ENCODE measurements at regions of chr11 and their contacts with region 1.

Region 1: GRCh38 chr11:14519917-14520746 is at the start of gene PSMA1:
- DNase-seq: peak; percentile 92
- H3K4me3 Mint-ChIP-seq: peak within 1 kb of the TSS; percentile 94
- H3K27ac Mint-ChIP-seq: peak within 1 kb of the TSS; percentile 94
- H3K4me1 Mint-ChIP-seq: peaks cover 33% of the 10 kb centered on the region
- H3K27me3 Mint-ChIP-seq: no peaks in the 10 kb centered on the region
- total RNA-seq, gene PSMA1: 313 and 340 TPM in 2 replicates

Region 2: DNA sequence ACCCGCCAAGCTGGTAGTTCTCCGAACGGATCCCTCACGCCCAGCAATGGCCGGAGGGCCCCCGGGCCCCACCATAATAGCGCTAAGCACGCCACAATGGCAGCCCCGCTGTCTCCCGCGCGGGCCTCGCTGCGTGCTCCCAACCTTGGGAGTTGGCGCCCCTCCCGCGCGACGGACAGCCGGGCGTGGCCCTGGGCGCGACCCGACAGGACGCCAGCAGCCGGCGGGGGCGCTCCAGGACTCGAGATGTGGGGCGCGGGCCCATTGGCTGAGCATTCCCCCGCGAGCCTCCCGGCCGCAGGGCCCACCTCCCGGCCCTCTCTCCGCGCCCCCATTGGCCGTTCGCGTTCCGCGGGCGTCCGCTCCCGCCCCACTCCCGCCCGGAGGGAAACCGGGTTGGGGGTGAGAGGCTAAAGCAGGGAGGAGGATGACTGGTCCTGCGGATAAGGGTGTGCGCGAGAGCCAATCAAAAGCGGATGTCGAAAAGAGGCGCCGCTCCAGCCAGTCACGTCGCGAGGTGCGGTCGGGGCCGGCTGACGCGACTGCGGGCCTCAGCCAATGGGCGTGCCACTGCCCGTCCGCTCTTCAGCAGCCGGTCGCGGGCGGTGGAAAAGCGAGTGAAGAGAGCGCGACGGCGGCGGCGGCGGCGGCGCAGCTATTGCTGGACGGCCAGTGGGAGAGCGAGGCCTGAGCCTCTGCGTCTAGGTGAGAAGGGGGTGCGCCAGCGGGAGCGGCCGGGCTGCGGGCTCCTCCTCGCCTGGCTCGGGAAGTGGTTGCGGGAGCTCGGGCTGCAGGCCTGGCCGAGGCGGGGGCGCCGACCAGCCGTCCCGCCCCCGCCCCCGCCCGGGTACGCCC is 851.8 kb before region 1 on chr11 and contains the start of gene FAR1:
- intact Hi-C with region 1: loop called (anchors 2 kb)
- DNase-seq: peak; percentile 97
- H3K4me3 Mint-ChIP-seq: peak within 1 kb of the TSS; percentile 98
- H3K27ac Mint-ChIP-seq: peak within 1 kb of the TSS; percentile 99
- H3K4me1 Mint-ChIP-seq: peaks cover 42% of the 10 kb centered on the region
- H3K27me3 Mint-ChIP-seq: peaks cover 17% of the 10 kb centered on the region
- total RNA-seq, gene FAR1: 67.3 and 67.4 TPM in 2 replicates

Region 3: GRCh38 chr11:14499554-14500180 is 20.5 kb before region 1 on chr11 and contains the start of gene COPB1:
- intact Hi-C with region 1: loop called (anchors 1 kb)
- DNase-seq: peak; percentile 90
- H3K4me3 Mint-ChIP-seq: peak within 1 kb of the TSS; percentile 100
- H3K27ac Mint-ChIP-seq: peak within 1 kb of the TSS; percentile 98
- H3K4me1 Mint-ChIP-seq: peaks cover 49% of the 10 kb centered on the region
- H3K27me3 Mint-ChIP-seq: no peaks in the 10 kb centered on the region
- total RNA-seq, gene COPB1: 94.8 and 101 TPM in 2 replicates

Region 4: DNA sequence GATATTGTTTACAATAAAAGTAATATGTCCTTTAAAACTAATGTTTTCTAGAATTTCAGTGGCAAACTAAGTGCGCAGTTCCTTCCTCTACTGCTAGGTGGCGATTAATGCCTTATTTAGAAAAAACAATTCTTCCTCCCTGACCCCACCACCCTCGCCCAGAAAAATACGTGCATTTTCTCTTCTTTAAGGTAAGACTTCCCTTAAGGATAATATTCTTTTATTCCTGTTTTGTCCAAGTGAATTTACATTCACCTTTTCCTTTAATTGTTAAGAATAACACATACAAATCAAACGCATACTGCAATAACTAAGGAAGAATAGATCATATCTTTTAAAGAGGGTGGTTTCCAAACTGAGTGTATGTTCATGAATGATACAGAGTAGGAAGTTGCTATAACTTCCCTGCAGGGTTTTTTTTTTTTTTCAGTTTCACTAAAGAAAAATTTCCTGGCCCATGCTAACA is 17.0 kb after region 1 on chr11:
- intact Hi-C with region 1: loop called (anchors 1 kb)
- DNase-seq: peak; percentile 12
- H3K4me3 Mint-ChIP-seq: peak overlapping the region; percentile 74
- H3K27ac Mint-ChIP-seq: peak overlapping the region; percentile 89
- H3K4me1 Mint-ChIP-seq: peaks cover 48% of the 10 kb centered on the region
- H3K27me3 Mint-ChIP-seq: no peaks in the 10 kb centered on the region

Region 5: GRCh38 chr11:14544611-14545010 is 24.5 kb after region 1 on chr11:
- intact Hi-C with region 1: loop called (anchors 1 kb)
- DNase-seq: no peak
- H3K4me3 Mint-ChIP-seq: peak overlapping the region; percentile 45
- H3K27ac Mint-ChIP-seq: peak overlapping the region; percentile 91
- H3K4me1 Mint-ChIP-seq: peaks cover 73% of the 10 kb centered on the region
- H3K27me3 Mint-ChIP-seq: no peaks in the 10 kb centered on the region

Region 6: GRCh38 chr11:14764579-14765527 is 244.7 kb after region 1 on chr11:
- intact Hi-C with region 1: loop called (anchors 1 kb)
- DNase-seq: peak; percentile 60
- H3K4me3 Mint-ChIP-seq: no peak overlapping the region
- H3K27ac Mint-ChIP-seq: no peak overlapping the region
- H3K4me1 Mint-ChIP-seq: peaks cover 41% of the 10 kb centered on the region
- H3K27me3 Mint-ChIP-seq: no peaks in the 10 kb centered on the region

Region 7: GRCh38 chr11:14842002-14842401 is 321.9 kb after region 1 on chr11:
- intact Hi-C with region 1: no loop called
- DNase-seq: no peak
- H3K4me3 Mint-ChIP-seq: no peak overlapping the region
- H3K27ac Mint-ChIP-seq: no peak overlapping the region
- H3K4me1 Mint-ChIP-seq: no peaks in the 10 kb centered on the region
- H3K27me3 Mint-ChIP-seq: no peaks in the 10 kb centered on the region

Region 8: GRCh38 chr11:15006139-15006759 is 486.1 kb after region 1 on chr11:
- intact Hi-C with region 1: loop called (anchors 10 kb)
- DNase-seq: no peak
- H3K4me3 Mint-ChIP-seq: no peak overlapping the region
- H3K27ac Mint-ChIP-seq: no peak overlapping the region
- H3K4me1 Mint-ChIP-seq: no peaks in the 10 kb centered on the region
- H3K27me3 Mint-ChIP-seq: peaks cover 55% of the 10 kb centered on the region

Region 9: DNA sequence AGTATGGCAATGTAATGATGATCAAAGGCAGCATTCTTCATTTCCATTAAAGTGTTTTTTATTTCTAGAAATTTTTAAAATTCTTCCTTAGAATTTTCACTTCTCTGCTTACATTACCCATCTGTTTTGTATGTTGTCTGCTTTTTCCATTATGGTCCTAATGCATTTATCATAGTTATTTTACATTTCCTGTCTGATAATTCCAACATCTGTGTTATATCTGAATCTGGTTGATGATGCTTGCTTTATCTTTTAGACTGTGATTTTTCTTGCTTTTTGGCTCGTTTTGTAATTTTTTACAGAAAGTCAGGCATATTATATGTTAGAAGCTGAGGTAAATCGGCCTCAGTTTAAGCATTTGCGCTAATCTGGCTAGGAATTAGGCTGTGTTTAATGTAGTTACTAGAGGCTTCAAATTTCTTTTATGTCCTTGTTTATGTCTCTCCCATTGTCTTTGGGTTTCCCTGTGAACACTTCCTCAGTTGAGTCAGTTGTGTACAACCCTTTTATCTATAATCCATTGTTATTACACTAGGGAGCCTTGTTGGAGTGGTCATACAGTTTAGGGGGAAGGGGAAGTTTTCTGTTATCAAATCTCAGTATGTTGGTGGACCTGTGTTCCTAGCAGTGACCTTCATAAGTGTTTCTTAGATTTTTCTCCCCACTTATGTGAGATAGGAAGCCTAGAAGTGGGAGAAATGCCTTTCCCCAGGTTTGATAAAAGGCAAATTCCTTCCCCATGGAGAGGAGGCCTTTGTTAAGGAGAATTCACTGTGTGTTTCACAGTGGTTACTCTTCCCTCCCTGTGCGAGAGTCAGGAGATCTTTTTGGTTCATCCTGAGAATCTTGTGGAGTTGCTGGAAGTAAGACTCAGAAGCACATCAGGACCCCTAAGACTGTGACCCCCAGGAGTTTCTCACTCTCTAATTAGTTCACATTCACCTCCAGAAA is 1032.0 kb after region 1 on chr11:
- intact Hi-C with region 1: no loop called
- DNase-seq: no peak
- H3K4me3 Mint-ChIP-seq: no peak overlapping the region
- H3K27ac Mint-ChIP-seq: no peak overlapping the region
- H3K4me1 Mint-ChIP-seq: no peaks in the 10 kb centered on the region
- H3K27me3 Mint-ChIP-seq: no peaks in the 10 kb centered on the region

Measured in activated T-helper 1 cell treated with anti-CD3 and anti-CD28 coated beads, Interleukin-12 subunit alpha, Interleukin-12 subunit beta, Interleukin-2, Interleukin-4 antibody, amounts not matched to agents 30 ng/mL and 10 ng/mL and 1 ng/mL, durations not matched to agents 14 hours and 24 hours and 36 hours (primary cell).